ENCODE measurements at regions of chr13 and their contacts with region 1.

Region 1: DNA sequence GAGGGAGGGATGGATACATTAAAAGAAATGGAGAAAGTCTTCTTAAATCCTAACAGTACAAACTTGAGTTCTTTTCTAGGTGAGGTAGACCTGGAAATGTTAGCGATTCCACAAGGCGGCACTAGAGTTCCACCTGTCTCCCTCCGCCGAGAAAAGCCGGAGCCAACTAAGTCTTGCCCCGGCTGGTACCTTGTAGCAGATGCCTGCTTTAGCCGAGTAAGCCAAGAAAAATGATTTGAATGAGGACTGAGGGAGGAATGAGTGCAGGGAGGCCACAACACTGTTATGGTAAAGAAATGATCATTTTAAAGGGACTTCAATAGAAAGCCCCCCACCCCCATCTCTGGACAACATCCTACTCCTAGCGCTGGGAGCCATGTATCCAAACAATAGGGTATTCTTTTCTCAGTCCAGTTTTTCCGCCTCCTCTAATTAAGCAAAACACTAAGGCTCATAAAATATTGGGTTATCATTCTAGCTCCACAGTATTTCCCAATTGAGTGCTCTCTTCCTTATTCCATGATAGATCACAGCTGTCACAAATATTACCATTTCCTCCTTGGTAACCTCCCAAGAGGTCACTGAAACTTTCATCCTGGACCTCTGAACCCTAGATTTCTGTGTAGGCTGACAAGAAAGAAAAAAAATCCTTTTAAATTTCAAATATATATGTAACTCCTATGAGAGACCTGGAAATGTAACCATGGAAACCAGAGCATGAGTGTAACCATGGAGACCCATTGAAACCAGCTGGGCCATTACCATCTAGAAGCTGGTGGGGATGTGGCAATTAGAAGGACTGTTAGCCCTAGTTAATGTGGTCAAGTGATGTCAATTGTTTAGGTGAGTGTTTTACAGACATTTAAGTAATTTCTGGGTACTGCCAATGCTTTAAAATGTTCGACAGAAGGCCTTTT is 58.3 kb downstream of the GPALPP1 start:
- H3K4me3 ChIP-seq: peak overlapping the region; percentile 35
- H3K27ac ChIP-seq: no peak overlapping the region
- H3K4me1 ChIP-seq: 0 out of 2 replicates have a peak, but pooled peaks cover 2% of the 10 kb centered on the region
- CTCF ChIP-seq: no peak

Region 2: DNA sequence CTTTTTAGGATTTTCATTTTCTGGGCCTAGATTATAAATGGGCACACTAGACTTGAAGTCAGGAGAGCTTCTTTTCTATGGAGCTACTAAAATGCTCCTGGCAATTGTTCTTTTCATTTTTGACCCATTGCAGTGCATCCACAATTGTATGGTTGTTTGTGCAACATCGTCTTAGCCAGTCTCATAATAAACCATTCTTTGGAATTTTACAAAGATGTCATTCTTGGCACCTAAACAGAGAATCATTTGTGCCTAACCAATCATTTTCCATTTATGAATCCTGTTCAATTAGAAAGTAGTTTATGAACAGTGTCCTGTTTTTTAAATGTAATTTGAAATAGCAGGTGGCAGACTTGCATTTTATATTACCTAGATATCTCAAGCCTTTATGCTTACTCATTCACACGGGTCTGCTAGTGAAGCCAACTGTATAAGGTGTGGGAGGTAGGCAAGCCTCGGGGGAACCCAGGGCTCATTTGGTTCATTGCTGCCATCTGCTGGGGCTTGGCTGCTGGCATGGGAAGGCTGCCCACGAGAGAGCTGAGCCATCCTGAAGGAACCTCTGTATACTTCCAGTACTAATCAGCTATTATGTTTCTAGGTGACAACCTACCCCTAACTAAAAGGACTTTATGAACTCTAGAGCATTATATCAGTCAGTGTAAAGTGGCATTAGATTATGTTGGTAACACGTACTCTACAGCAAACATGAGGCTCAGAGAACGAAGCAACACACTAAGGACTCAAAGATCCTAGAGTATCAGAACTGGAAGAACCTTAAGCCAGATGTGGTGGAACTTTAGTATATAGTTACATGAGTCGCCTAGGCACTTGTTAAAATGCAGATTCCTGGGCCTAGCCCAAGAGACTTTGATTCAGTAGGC is 233.3 kb after region 1 on chr13:
- CTCF ChIA-PET with region 1: interaction called, 83 read pairs
- POLR2A ChIA-PET with region 1: interaction called, 3 read pairs
- H3K4me3 ChIP-seq: no peak overlapping the region
- H3K27ac ChIP-seq: no peak overlapping the region
- H3K4me1 ChIP-seq: no peaks in the 10 kb centered on the region
- CTCF ChIP-seq: no peak

Region 3: DNA sequence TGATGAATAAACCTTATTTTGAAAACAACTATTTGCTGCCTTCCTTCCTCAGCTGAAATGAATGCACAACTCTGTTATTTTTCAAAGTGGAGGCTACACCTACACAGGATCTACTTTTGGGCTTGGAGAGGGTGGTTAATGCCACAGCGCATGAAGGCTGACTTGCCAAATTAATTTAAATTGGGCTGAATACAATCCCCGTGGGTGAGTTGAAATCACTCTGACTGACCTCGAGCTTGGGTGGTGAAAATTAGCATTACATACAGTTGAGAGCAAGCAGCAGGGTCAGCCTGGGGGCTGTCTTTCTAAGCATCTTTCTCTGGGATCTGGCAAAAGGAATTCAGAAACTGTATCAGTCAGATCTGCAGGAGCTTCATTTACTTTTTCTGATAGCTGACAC is 254.9 kb after region 1 on chr13:
- CTCF ChIA-PET with region 1: interaction called, 62 read pairs
- POLR2A ChIA-PET with region 1: no interaction called
- H3K4me3 ChIP-seq: no peak overlapping the region
- H3K27ac ChIP-seq: no peak overlapping the region
- H3K4me1 ChIP-seq: no peaks in the 10 kb centered on the region
- CTCF ChIP-seq: no peak

Region 4: GRCh38 chr13:45310341-45311125 is 262.9 kb after region 1 on chr13:
- CTCF ChIA-PET with region 1: interaction called, 62 read pairs
- POLR2A ChIA-PET with region 1: no interaction called
- H3K4me3 ChIP-seq: no peak overlapping the region
- H3K27ac ChIP-seq: no peak overlapping the region
- H3K4me1 ChIP-seq: no peaks in the 10 kb centered on the region; the same call in 1 of the 2 replicates
- CTCF ChIP-seq: no peak

Region 5: GRCh38 chr13:45393941-45394570 is 346.4 kb after region 1 on chr13:
- CTCF ChIA-PET with region 1: interaction called, 10 read pairs
- POLR2A ChIA-PET with region 1: no interaction called
- H3K4me3 ChIP-seq: no peak overlapping the region
- H3K27ac ChIP-seq: no peak overlapping the region
- H3K4me1 ChIP-seq: 0 out of 2 replicates have a peak, but pooled peaks cover 3% of the 10 kb centered on the region
- CTCF ChIP-seq: no peak

Region 6: GRCh38 chr13:45615501-45616101 is 567.9 kb after region 1 on chr13 and contains the start of gene ERICH6B:
- CTCF ChIA-PET with region 1: no interaction called
- POLR2A ChIA-PET with region 1: no interaction called
- H3K4me3 ChIP-seq: no peak within 1 kb of the TSS
- H3K27ac ChIP-seq: no peak within 1 kb of the TSS
- H3K4me1 ChIP-seq: 0 out of 2 replicates have a peak, but pooled peaks cover 3% of the 10 kb centered on the region
- CTCF ChIP-seq: no peak